ENCODE measurements at regions of chr16 and their contacts with region 1.

Region 1: DNA sequence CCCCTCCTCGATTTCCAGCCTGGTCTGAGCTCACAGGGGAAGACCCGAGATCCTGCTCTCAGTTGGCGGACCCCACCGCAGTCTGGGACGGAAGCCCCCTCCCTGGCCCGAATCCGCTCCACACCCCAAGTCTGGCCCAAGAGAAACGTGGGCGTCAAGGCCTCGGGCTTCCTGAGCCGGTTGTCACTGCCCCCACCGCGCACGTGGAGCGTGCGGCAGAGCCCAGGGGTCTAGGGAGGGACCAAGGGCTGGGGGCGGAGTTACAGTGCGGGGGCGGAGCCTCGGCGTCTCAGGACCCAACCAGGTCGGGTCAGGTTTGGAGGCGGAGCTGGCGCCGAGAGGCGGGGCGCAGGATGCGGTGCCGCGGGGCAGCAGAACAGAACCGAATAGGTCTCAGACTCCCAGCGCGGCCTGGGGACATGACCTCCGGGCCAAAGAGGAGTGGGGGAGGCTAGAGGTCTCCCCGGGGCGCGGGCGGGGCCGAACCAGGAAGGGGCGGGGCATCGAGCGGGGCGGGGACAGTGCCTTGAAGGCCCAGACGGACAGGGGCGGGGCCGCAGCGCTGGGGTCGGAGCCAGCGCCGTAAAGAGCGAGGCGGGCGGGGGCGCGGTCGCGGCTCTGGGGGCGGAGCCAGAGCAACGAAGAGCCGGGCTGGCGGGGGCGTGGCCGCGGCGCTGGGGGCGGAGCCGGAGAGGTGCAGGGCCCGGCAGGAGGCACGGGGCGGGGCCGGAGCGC is 431 bp upstream of the ZFPM1 start:
- DNase-seq: peak; percentile 97
- H3K4me3 Mint-ChIP-seq: peak overlapping the region; percentile 79
- H3K27ac Mint-ChIP-seq: peak overlapping the region; percentile 62
- H3K4me1 Mint-ChIP-seq: peaks cover 27% of the 10 kb centered on the region
- H3K27me3 Mint-ChIP-seq: peaks cover 13% of the 10 kb centered on the region

Region 2: DNA sequence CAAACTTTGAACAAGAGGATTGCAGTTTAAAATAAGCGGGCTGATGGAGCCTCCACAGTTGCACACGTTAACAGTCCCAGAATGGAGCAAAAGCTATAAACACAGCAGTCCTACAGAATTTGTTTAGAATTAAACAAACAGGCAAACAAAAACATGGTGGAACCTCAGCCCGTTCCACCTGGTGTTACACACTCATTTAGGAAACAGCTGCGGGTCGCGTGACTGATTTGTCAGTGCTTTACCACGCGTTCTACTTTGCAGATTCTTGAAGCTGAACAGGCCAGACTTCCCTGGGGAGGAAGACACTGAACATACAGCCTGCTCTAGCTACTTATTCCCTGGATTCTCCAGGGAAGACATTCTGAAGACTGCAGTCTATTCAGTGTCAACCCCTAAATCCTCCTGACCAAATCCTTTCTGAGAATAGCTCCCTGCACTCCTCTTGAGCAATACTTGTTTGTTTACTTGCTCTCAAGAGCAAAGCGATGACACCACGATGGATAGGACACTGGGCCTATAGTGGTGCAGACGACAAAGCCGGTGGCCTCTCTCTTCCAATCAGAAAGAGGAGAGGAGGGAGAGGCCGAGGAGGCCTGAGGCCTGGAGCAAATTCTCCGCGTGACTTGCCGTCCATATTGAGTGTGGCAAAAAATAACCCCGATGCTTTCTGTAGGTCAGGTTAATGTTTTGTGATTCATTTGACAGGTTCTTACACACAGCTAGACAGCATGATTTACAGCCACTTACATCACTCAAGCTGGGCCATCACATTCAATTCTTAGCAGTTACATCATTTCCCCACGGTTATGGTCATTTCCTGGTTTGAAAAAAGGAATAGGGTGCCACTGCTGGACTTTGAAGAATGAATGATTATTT is 1064.5 kb before region 1 on chr16:
- intact Hi-C with region 1: loop called (anchors 5 kb)
- DNase-seq: peak; percentile 88
- H3K4me3 Mint-ChIP-seq: peak overlapping the region; percentile 61
- H3K27ac Mint-ChIP-seq: peak overlapping the region; percentile 89
- H3K4me1 Mint-ChIP-seq: peaks cover 34% of the 10 kb centered on the region
- H3K27me3 Mint-ChIP-seq: peaks cover 2% of the 10 kb centered on the region

Region 3: GRCh38 chr16:87950765-87951549 is 501.7 kb before region 1 on chr16 and contains the start of gene BANP:
- intact Hi-C with region 1: loop called (anchors 1 kb)
- DNase-seq: peak; percentile 95
- H3K4me3 Mint-ChIP-seq: peak within 1 kb of the TSS; percentile 94
- H3K27ac Mint-ChIP-seq: peak within 1 kb of the TSS; percentile 94
- H3K4me1 Mint-ChIP-seq: peaks cover 49% of the 10 kb centered on the region
- H3K27me3 Mint-ChIP-seq: no peaks in the 10 kb centered on the region
- total RNA-seq, gene BANP: 35.4 and 35.5 TPM in 2 replicates

Region 4: DNA sequence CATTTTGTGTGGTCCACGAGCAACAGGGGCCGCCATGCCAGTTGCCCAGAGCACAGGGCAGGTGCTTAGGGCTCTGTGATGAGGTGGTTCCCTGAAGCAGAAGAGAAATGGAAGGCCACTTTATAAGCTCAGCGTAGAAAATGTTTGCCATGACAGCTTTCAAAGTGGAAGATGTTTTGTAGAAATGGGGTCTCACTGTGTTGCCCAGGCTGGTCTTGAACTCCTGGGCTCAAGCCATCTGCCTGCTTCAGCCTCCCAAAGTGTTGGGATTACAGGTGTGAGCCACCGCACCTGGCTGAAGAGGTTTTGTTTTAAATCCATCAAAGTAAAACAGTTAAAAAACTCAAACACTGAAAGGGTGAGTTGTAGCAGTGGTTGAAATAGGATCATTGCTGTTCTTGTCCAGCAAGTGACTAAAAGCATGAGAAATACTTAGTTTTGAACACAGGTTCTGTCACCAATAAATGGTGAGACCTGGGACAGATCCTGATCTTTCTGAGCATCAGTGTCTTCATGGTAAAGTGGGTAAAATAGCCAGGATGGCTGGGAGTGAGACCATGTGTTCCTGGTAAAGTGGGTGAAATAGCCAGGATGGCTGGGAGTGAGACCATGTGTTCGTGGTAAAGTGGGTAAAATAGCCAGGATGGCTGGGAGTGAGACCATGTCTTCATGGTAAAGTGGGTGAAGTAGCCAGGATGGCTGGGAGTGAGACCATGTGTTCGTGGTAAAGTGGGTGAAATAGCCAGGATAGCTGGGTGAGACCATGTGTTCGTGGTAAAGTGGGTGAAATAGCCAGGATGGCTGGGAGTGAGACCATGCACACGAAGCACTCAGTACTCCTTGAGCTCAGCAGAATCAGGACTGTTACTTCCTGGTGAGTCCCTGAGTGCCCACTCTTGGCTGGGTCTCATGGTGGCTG is 455.4 kb before region 1 on chr16:
- intact Hi-C with region 1: no loop called
- DNase-seq: no peak
- H3K4me3 Mint-ChIP-seq: no peak overlapping the region
- H3K27ac Mint-ChIP-seq: no peak overlapping the region
- H3K4me1 Mint-ChIP-seq: peaks cover 8% of the 10 kb centered on the region
- H3K27me3 Mint-ChIP-seq: no peaks in the 10 kb centered on the region

Region 5: DNA sequence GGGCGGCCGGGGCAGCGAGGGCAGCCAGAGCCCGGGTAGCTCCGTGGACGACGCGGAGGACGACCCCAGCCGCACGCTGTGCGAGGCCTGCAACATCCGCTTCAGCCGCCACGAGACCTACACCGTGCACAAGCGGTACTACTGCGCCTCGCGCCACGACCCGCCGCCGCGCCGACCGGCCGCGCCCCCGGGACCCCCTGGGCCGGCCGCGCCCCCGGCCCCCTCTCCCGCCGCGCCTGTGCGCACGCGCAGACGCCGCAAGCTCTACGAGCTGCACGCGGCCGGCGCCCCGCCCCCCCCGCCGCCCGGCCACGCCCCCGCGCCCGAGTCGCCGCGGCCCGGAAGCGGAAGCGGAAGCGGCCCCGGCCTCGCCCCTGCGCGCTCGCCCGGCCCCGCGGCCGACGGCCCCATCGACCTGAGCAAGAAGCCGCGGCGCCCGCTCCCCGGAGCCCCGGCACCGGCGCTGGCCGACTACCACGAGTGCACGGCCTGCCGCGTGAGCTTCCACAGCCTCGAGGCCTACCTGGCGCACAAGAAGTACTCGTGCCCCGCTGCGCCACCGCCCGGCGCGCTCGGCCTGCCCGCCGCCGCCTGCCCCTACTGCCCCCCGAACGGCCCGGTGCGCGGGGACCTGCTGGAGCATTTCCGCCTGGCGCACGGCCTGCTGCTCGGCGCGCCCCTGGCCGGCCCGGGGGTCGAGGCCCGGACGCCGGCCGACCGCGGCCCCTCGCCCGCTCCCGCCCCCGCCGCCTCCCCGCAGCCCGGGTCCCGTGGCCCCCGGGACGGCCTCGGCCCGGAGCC is 81.5 kb after region 1 on chr16:
- intact Hi-C with region 1: loop called (anchors 1 kb)
- DNase-seq: peak; percentile 79
- H3K4me3 Mint-ChIP-seq: no peak overlapping the region
- H3K27ac Mint-ChIP-seq: no peak overlapping the region
- H3K4me1 Mint-ChIP-seq: no peaks in the 10 kb centered on the region
- H3K27me3 Mint-ChIP-seq: no peaks in the 10 kb centered on the region

Region 6: DNA sequence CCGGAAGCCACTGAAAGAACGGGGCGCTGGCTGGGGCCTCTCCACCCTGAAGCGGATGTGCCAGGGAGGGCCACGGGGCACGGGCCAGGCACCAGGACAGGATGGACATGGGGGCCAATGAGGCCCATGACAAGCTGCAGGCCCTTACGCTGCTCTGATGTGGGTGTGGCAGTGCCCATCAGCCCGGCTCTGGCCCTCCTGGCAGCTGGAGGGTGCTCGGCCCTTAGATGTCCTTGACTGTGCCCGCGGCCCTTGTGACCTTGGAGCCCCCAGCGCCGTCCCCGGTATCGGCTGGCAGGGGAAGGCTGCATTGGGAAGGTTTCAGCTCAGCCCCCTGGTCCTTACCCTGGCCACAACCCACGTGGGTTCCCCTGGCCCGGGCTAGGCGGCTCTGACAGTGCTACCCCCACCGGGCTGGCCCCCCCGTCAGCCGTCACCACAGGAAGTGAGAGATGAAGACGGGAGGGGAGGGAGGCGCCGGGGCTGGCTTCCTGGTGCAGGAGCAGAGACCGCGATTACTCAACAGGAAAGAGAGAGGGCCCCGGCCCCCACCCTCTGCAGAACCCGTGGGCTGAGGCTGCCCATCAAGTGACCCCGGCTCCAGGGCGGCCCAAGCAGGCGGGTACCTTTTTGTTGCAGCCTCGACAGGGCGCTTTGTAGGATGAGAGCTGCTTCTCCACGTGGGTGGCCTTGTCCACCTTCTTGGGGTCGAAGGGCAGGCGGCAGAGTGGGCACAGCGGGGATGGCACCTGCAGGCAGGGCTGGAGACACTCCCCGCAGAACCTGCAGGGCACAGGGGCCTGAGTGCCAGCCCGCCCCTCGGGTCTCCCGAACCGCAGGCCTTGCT is 248.2 kb after region 1 on chr16:
- intact Hi-C with region 1: loop called (anchors 5 kb)
- DNase-seq: peak; percentile 92
- H3K4me3 Mint-ChIP-seq: peak overlapping the region; percentile 89
- H3K27ac Mint-ChIP-seq: peak overlapping the region; percentile 94
- H3K4me1 Mint-ChIP-seq: peaks cover 57% of the 10 kb centered on the region
- H3K27me3 Mint-ChIP-seq: no peaks in the 10 kb centered on the region

Region 7: GRCh38 chr16:88856828-88857733 is 404.4 kb after region 1 on chr16 and contains the starts of genes GALNS and TRAPPC2L:
- intact Hi-C with region 1: loop called (anchors 2 kb)
- DNase-seq: peak; percentile 98
- H3K4me3 Mint-ChIP-seq: peak within 1 kb of the TSS; percentile 96
- H3K27ac Mint-ChIP-seq: peak within 1 kb of the TSS; percentile 88
- H3K4me1 Mint-ChIP-seq: peaks cover 25% of the 10 kb centered on the region
- H3K27me3 Mint-ChIP-seq: no peaks in the 10 kb centered on the region
- total RNA-seq, gene GALNS: 21.9 and 23.8 TPM in 2 replicates
- total RNA-seq, gene TRAPPC2L: 63.1 and 65.4 TPM in 2 replicates